PC-3 (cell line): ENCODE measurements at regions of chr14 and their contacts with region 1.

Region 1: GRCh38 chr14:55129428-55130195 is 560 bp downstream of the LGALS3 start:
- DNase-seq: peak; percentile 84
- ATAC-seq: peak; percentile 59
- H3K4me3 ChIP-seq: peak overlapping the region; percentile 73
- H3K27ac ChIP-seq: peak overlapping the region; percentile 70
- H3K4me1 ChIP-seq: peaks cover 58% of the 10 kb centered on the region
- H3K27me3 ChIP-seq: no peaks in the 10 kb centered on the region
- CTCF ChIP-seq: no peak

Region 2: GRCh38 chr14:55071870-55072640 is 57.6 kb before region 1 on chr14:
- CTCF ChIA-PET with region 1: interaction called, 15 read pairs
- POLR2A ChIA-PET with region 1: no interaction called
- intact Hi-C with region 1: no loop called
- DNase-seq: peak; percentile 75
- ATAC-seq: peak; percentile 72
- H3K4me3 ChIP-seq: no peak overlapping the region
- H3K27ac ChIP-seq: peak overlapping the region; percentile 52
- H3K4me1 ChIP-seq: peaks cover 9% of the 10 kb centered on the region; the same call in 1 of the 2 replicates
- H3K27me3 ChIP-seq: no peaks in the 10 kb centered on the region
- CTCF ChIP-seq: no peak

Region 3: GRCh38 chr14:55102141-55102621 is 27.4 kb before region 1 on chr14:
- CTCF ChIA-PET with region 1: interaction called, 6 read pairs
- POLR2A ChIA-PET with region 1: interaction called, 45 read pairs
- intact Hi-C with region 1: loop called (anchors 1 kb)
- DNase-seq: peak; percentile 100
- ATAC-seq: peak; percentile 77
- H3K4me3 ChIP-seq: peak overlapping the region; percentile 51
- H3K27ac ChIP-seq: peak overlapping the region; percentile 89
- H3K4me1 ChIP-seq: peaks cover 49% of the 10 kb centered on the region
- H3K27me3 ChIP-seq: no peaks in the 10 kb centered on the region
- CTCF ChIP-seq: no peak

Region 4: GRCh38 chr14:55160989-55161388 is 31.4 kb after region 1 on chr14:
- CTCF ChIA-PET with region 1: interaction called, 4 read pairs
- POLR2A ChIA-PET with region 1: no interaction called
- intact Hi-C with region 1: loop called (anchors 2 kb)
- DNase-seq: peak; percentile 79
- ATAC-seq: peak; percentile 94
- H3K4me3 ChIP-seq: no peak overlapping the region
- H3K27ac ChIP-seq: no peak overlapping the region
- H3K4me1 ChIP-seq: no peaks in the 10 kb centered on the region
- H3K27me3 ChIP-seq: no peaks in the 10 kb centered on the region
- CTCF ChIP-seq: peak; percentile 92

Region 5: GRCh38 chr14:55191203-55192053 is 61.8 kb after region 1 on chr14 and contains the start of gene DLGAP5:
- CTCF ChIA-PET with region 1: no interaction called
- POLR2A ChIA-PET with region 1: no interaction called
- intact Hi-C with region 1: loop called (anchors 2 kb)
- DNase-seq: peak; percentile 100
- ATAC-seq: peak; percentile 96
- H3K4me3 ChIP-seq: peak within 1 kb of the TSS; percentile 73
- H3K27ac ChIP-seq: peak within 1 kb of the TSS; percentile 5
- H3K4me1 ChIP-seq: peaks cover 16% of the 10 kb centered on the region
- H3K27me3 ChIP-seq: no peaks in the 10 kb centered on the region
- CTCF ChIP-seq: no peak
- total RNA-seq, gene DLGAP5: 94.1 and 97.9 TPM in 2 replicates